Calu3 (cell line): ENCODE measurements at regions of chr16 and their contacts with region 1.

Region 1: GRCh38 chr16:9870962-9871361 is 311.3 kb downstream of the GRIN2A start:
- DNase-seq: peak; percentile 78
- H3K4me3 Mint-ChIP-seq: no peak overlapping the region
- H3K27ac Mint-ChIP-seq: peak overlapping the region; percentile 43
- H3K4me1 Mint-ChIP-seq: peaks cover 10% of the 10 kb centered on the region
- H3K27me3 Mint-ChIP-seq: no peaks in the 10 kb centered on the region
- CTCF ChIP-seq: no peak

Region 2: GRCh38 chr16:9489835-9490467 is 381.0 kb before region 1 on chr16:
- CTCF ChIA-PET with region 1: interaction called, 13 read pairs
- intact Hi-C with region 1: no loop called
- DNase-seq: peak; percentile 26
- H3K4me3 Mint-ChIP-seq: no peak overlapping the region
- H3K27ac Mint-ChIP-seq: no peak overlapping the region
- H3K4me1 Mint-ChIP-seq: no peaks in the 10 kb centered on the region
- H3K27me3 Mint-ChIP-seq: peaks cover 44% of the 10 kb centered on the region
- CTCF ChIP-seq: no peak